ENCODE measurements at regions of chr12 and their contacts with region 1.

Region 1: DNA sequence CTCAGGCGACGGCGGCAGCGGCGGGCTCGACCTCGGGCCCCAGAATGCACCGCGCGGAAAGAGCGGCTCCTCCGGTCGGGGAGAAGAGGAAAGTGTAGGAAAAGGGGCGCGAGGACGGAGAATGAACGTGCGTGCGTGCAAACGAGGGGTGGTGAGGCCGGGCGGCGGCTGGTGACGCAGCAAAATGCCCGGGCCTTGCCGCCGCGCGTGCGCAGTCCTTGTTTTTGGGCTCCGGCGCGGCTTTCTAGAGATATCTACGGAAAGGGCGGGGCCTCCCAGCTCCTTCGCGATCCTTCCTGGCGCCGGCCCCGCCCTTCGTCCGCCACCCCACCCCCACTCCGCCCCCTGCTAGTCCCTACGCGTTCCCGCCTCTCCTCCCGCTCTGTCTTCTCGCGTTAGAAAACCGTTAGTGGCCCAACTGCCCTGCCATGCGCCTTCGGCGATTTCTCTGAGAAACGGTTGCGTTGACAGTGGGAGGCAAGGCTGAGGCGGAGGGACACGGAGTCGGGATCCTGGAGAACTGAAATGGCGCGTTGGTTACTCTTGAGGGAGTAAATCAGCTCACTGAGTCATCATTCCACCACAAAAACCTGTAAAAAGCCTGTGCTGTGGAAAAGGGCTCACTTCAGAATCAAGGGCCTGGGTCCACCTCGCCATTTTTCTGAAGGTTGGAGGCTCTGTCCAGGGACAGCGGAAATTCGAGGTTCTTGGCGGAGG is at the start of gene PTGES3:
- DNase-seq: peak; percentile 93 to 99
- H3K4me3 ChIP-seq: peak within 1 kb of the TSS; percentile 87 to 92
- H3K27ac ChIP-seq: peak within 1 kb of the TSS; percentile 99 to 100
- H3K4me1 ChIP-seq: peaks cover 8 to 22% of the 10 kb centered on the region in 2 donors
- H3K27me3 ChIP-seq: no peaks in the 10 kb centered on the region
- CTCF ChIP-seq: no peak
- total RNA-seq, gene PTGES3: 62.2 TPM

Region 2: DNA sequence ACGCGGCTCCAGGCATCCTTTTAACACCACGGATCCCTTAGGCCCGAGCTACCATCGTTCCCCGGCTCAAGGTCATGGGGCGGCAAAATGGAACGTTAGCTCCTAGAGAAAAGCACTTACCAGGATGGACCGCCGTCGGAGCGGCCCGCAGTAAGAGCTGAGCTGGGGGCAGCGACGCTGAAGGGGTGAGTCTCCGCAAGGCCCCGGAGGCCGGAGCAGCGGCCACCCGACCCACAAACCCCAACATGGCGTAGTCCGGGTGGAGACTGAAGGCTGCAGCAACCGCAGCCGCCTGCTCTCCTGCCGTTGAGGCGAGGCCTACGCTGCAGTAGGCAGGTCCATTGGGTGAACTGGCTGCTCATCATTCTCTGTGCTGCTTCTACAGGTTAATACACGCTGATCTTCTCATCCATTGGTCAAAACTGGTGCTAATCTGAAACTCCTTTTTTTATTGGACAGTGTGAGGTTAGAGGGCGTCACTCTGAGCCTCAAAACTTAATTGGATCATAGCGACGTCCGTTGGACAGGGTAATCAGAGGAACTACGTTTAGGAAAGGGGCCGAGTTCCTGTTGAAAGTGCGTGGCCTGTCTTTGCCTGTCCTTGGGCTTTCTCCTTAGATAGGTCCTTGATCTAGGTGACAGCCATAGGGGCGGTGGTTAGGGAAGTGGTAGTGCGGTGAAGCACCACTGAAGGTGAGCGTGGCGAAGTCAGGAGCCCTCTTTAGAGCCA is 42.4 kb before region 1 on chr12 and contains the start of gene ATP5F1B:
- intact Hi-C with region 1: loop called (anchors 1 kb)
- DNase-seq: peak; percentile 97 to 98
- H3K4me3 ChIP-seq: peak within 1 kb of the TSS; percentile 94
- H3K27ac ChIP-seq: peak within 1 kb of the TSS; percentile 88 to 91
- H3K4me1 ChIP-seq: peaks cover 10 to 12% of the 10 kb centered on the region in 2 donors
- H3K27me3 ChIP-seq: no peaks in the 10 kb centered on the region
- CTCF ChIP-seq: no peak
- total RNA-seq, gene ATP5F1B: 197 TPM

Measured in ascending aorta (tissue), 2 donors.